Activated T-helper 2 cell treated with anti-CD3 and anti-CD28 coated beads, Interferon-gamma antibody, Interleukin-2, Interleukin-4, amounts not matched to agents 10 μg/mL and 5 μg/mL and 100 μg/mL, durations not matched to agents 14 hours and 24 hours and 36 hours (primary cell): ENCODE measurements at regions of chr13 and their contacts with region 1.

Region 1: GRCh38 chr13:30002577-30002976 is 152.2 kb upstream of the UBL3 start:
- DNase-seq: no peak
- H3K4me3 Mint-ChIP-seq: no peak overlapping the region
- H3K27ac Mint-ChIP-seq: no peak overlapping the region
- H3K4me1 Mint-ChIP-seq: peaks cover 33% of the 10 kb centered on the region
- H3K27me3 Mint-ChIP-seq: no peaks in the 10 kb centered on the region

Region 2: DNA sequence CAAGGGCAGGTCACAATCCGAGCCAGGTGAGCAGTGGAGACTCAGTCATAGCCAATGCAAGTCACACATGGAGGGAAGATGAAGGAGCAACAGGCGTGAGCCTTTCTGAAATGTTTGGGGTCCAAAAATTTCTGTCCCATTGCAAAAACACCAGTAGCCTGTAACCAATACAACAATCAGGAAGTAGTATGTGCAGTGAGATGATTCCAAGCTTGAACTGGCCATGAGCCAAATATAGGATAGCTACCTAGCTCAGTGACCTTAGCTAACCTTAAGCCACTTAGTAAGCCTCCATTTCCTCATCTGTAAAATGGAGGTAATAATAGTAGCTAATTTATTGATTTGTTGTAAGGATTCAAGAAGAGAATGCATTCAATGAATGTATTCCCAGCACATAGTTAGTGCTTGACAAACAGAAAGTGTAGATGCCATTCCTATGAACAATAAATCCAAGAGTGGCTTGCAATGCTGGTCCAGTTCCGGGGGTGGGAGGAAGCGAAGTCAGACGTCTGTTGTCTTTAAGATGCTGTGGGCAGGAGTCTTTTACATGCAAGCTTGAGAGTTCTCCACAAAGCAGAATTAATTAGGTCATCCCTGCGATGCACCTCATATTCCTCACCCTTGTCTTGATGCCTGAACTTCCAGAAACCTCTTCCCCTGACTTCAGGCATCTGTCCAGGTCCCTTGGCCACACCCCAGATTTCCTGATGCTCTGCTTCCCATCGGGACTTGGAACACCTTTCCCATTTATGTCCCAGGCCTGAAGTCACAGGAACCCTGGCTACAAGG is 43.5 kb after region 1 on chr13:
- intact Hi-C with region 1: loop called (anchors 5 kb)
- DNase-seq: no peak
- H3K4me3 Mint-ChIP-seq: no peak overlapping the region
- H3K27ac Mint-ChIP-seq: no peak overlapping the region
- H3K4me1 Mint-ChIP-seq: peaks cover 45% of the 10 kb centered on the region
- H3K27me3 Mint-ChIP-seq: peaks cover under 1% of the 10 kb centered on the region

Region 3: DNA sequence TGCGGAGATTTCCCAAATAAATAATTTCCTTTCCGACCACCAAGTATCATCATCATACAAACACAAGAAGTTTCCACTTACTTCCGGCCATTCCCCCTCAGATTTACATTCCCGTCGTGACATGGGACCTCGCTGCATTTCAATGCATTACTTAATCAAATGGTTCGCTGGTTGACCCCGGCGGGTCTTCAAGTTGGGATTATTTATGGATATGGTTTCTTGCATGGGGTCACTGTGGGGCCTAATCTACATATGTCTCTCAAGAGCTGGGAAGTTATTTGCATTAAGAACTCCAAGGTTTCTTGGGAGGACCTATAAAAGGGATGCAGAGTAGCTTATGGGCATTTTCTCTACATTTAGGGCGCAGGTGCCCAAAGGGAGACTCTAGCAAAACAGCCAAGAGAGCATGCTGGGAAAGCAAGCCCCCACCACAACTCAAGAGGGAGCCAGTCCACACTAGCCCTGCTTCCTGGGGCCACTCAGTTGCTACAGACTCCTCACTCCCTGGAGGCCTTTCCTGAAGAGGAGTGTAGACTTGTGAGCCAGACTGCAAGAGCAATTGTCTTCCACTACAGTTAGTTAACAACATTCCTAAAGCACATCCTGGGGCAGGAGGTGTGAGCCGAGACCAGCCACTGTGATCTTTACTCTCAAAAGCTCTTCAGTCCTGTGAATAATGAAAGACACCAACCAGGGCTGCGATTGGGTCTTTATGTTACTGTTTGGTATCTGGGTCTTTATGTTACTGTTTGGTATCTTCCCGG is 179.5 kb after region 1 on chr13:
- intact Hi-C with region 1: no loop called
- DNase-seq: no peak
- H3K4me3 Mint-ChIP-seq: no peak overlapping the region
- H3K27ac Mint-ChIP-seq: no peak overlapping the region
- H3K4me1 Mint-ChIP-seq: no peaks in the 10 kb centered on the region
- H3K27me3 Mint-ChIP-seq: no peaks in the 10 kb centered on the region